Mammary epithelial cell (primary cell): ENCODE measurements at regions of chr19 and their contacts with region 1.

Region 1: GRCh38 chr19:12884926-12885748 is 1.9 kb downstream of the KLF1 start:
- DNase-seq: peak; percentile 80
- H3K4me3 ChIP-seq: peak overlapping the region; percentile 19 to 47 (median 28)
- H3K27ac ChIP-seq: no peak overlapping the region
- H3K4me1 ChIP-seq: peaks cover 17% of the 10 kb centered on the region
- H3K27me3 ChIP-seq: no peaks in the 10 kb centered on the region
- CTCF ChIP-seq: peak; percentile 21 to 43

Region 2: GRCh38 chr19:11902228-11902627 is 982.9 kb before region 1 on chr19:
- CTCF ChIA-PET with region 1: no interaction called
- dilution Hi-C with region 1: no loop called
- in situ Hi-C with region 1: no loop called
- intact Hi-C with region 1: no loop called
- DNase-seq: no peak
- H3K4me3 ChIP-seq: no peak overlapping the region
- H3K27ac ChIP-seq: no peak overlapping the region
- H3K4me1 ChIP-seq: no peaks in the 10 kb centered on the region
- H3K27me3 ChIP-seq: no peaks in the 10 kb centered on the region
- CTCF ChIP-seq: no peak

Region 3: DNA sequence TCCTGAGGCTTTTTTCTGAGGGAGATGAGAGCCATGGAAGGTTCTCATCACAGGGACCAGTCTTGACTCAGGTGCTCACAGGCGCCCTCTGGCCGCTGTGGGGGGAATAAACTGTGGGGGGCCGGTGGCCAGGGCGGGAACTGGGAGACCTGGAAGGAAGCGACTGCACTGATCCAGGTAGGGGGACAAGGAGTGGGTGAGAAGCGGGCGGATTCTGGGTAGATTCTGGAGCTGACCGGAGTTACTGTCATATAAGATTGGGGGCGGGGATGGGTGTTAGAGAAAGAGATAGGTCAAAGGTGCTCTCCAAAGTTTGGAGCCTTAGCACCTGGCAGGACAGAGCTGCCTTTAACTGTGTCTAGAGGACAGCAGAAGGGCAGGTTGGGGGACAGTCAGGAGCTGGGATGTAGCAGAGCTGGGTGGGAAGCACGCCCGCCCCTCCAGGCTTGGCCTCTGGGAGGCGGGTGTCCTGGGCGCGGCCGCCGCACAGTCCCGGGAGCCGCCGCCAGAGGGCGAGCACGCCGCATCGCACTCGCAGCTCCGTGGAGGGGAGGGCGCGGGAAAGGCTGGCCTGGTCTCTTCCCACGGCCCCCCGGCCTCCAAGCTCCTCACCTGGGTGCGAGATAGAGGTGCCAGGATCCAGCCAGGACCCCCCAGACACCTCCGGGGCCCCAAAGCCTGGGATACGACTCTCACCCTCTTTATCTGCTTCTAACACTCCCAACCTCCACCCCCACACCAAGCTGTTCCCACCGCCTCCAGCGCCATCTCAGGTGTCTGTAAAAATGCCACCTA is 80.1 kb after region 1 on chr19:
- CTCF ChIA-PET with region 1: interaction called, 8 read pairs
- dilution Hi-C with region 1: no loop called
- in situ Hi-C with region 1: no loop called
- intact Hi-C with region 1: loop called (anchors 1 kb)
- DNase-seq: peak; percentile 65
- H3K4me3 ChIP-seq: peak overlapping the region; percentile 44 to 53 (median 47)
- H3K27ac ChIP-seq: peak overlapping the region; percentile 15
- H3K4me1 ChIP-seq: peaks cover 9% of the 10 kb centered on the region
- H3K27me3 ChIP-seq: no peaks in the 10 kb centered on the region
- CTCF ChIP-seq: peak; percentile 82 to 96